B cell (primary cell): ENCODE measurements at regions of chr12 and their contacts with region 1.

Region 1: DNA sequence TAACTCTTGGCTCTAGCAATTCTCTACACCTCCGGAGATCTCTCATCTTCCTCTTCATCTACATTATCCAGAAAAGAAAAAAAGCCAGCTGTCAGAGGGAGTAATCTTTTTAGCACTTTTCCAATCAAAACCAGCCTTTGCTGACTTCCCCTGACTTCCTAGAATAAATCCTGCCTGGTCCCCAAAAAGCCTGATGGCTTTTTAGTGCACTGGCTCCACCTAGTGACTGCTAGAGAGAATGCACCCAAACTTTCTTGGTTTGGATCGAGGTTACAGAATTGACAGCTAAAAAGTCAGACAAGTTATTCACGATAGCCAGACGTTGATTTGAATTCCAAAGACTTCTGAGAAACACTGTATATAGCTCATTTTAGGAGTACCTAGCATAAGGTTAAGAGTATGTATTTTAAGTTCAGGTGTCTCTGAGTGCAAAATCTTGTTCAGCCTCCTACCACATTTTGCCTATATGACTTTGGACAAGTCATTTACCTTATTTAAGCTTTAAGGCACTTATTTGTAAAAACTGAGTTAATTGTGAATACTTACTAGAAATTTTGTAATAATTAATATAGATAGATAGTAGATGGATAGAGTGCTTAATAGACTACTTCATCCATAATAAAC is 185.7 kb upstream of the GRIN2B start:
- DNase-seq: peak; percentile 76
- ATAC-seq: peak; percentile 72
- H3K4me3 ChIP-seq: no peak overlapping the region
- H3K4me3 Mint-ChIP-seq: no peak overlapping the region
- H3K27ac ChIP-seq: no peak overlapping the region
- H3K27ac Mint-ChIP-seq: no peak overlapping the region
- H3K4me1 ChIP-seq: peaks cover 19 to 21% of the 10 kb centered on the region in 2 donors
- H3K4me1 Mint-ChIP-seq: peaks cover 25% of the 10 kb centered on the region
- H3K27me3 ChIP-seq: no peaks in the 10 kb centered on the region
- H3K27me3 Mint-ChIP-seq: no peaks in the 10 kb centered on the region
- CTCF ChIP-seq: peak; percentile 100

Region 2: GRCh38 chr12:13278249-13278787 is 888.8 kb before region 1 on chr12:
- CTCF ChIA-PET with region 1: interaction called, 18 read pairs
- POLR2A ChIA-PET with region 1: no interaction called
- intact Hi-C with region 1: loop called (anchors 5 kb)
- DNase-seq: peak; percentile 65
- ATAC-seq: peak; percentile 60
- H3K4me3 ChIP-seq: no peak overlapping the region
- H3K4me3 Mint-ChIP-seq: no peak overlapping the region
- H3K27ac ChIP-seq: no peak overlapping the region
- H3K27ac Mint-ChIP-seq: no peak overlapping the region
- H3K4me1 ChIP-seq: peaks cover 4 to 5% of the 10 kb centered on the region in 2 donors
- H3K4me1 Mint-ChIP-seq: peaks cover 6% of the 10 kb centered on the region
- H3K27me3 ChIP-seq: peaks cover 0 to 38% (median 10%) of the 10 kb centered on the region in 4 experiments
- H3K27me3 Mint-ChIP-seq: peaks cover 42% of the 10 kb centered on the region
- CTCF ChIP-seq: peak; percentile 97

Region 3: GRCh38 chr12:13744561-13744960 is 422.6 kb before region 1 on chr12:
- CTCF ChIA-PET with region 1: no interaction called
- POLR2A ChIA-PET with region 1: no interaction called
- intact Hi-C with region 1: loop called (anchors 2 kb)
- DNase-seq: no peak
- ATAC-seq: no peak
- H3K4me3 ChIP-seq: no peak overlapping the region
- H3K4me3 Mint-ChIP-seq: no peak overlapping the region
- H3K27ac ChIP-seq: no peak overlapping the region
- H3K27ac Mint-ChIP-seq: no peak overlapping the region
- H3K4me1 ChIP-seq: peaks cover 0 to 4% of the 10 kb centered on the region in 2 donors
- H3K4me1 Mint-ChIP-seq: peaks cover 3% of the 10 kb centered on the region
- H3K27me3 ChIP-seq: peaks cover 0 to 7% (median 3%) of the 10 kb centered on the region in 4 experiments
- H3K27me3 Mint-ChIP-seq: peaks cover 35% of the 10 kb centered on the region
- CTCF ChIP-seq: no peak

Region 4: GRCh38 chr12:13962699-13963098 is 204.4 kb before region 1 on chr12:
- CTCF ChIA-PET with region 1: no interaction called
- POLR2A ChIA-PET with region 1: no interaction called
- intact Hi-C with region 1: loop called (anchors 10 kb)
- DNase-seq: no peak
- ATAC-seq: no peak
- H3K4me3 ChIP-seq: no peak overlapping the region
- H3K4me3 Mint-ChIP-seq: no peak overlapping the region
- H3K27ac ChIP-seq: no peak overlapping the region
- H3K27ac Mint-ChIP-seq: no peak overlapping the region
- H3K4me1 ChIP-seq: no peaks in the 10 kb centered on the region
- H3K4me1 Mint-ChIP-seq: no peaks in the 10 kb centered on the region
- H3K27me3 ChIP-seq: peaks cover 0 to 28% (median 11%) of the 10 kb centered on the region in 4 experiments
- H3K27me3 Mint-ChIP-seq: peaks cover 52% of the 10 kb centered on the region
- CTCF ChIP-seq: peak; percentile 24

Region 5: DNA sequence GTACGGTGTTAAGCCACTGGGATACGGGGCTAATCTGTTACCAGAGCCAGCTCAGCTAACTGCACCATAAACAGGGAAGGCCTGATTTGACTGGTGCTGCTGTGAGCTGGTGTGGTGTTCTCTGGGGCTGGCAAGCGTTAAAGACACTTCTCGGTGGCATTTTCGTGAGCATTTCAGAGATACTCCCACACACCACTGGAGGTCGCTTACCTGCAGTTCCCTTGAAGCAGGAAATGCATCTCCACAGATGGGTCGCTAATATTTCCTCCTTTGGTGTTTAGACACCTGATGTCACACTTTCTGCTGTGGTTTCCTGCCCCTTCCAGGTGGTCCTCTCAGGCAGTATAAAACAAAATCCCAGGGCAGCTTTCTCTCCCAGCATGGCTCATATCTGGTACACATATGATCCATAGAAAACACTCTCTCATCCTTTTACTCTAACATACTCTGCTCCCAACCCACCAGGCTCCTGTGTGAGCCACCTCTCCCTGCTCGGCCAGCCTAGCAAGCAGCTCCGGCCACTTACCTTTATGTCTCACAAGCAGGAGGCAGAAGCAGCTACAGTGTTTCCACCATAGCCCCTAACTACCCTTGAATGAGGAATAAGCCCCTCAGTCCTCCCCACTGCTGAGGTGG is 55.8 kb before region 1 on chr12:
- CTCF ChIA-PET with region 1: interaction called, 211 read pairs
- POLR2A ChIA-PET with region 1: no interaction called
- intact Hi-C with region 1: loop called (anchors 1 kb)
- DNase-seq: peak; percentile 82
- ATAC-seq: peak; percentile 97
- H3K4me3 ChIP-seq: no peak overlapping the region
- H3K4me3 Mint-ChIP-seq: peak overlapping the region; percentile 26
- H3K27ac ChIP-seq: no peak overlapping the region
- H3K27ac Mint-ChIP-seq: peak overlapping the region; percentile 67
- H3K4me1 ChIP-seq: peaks cover 13% of the 10 kb centered on the region in 2 donors
- H3K4me1 Mint-ChIP-seq: peaks cover 13% of the 10 kb centered on the region
- H3K27me3 ChIP-seq: no peaks in the 10 kb centered on the region
- H3K27me3 Mint-ChIP-seq: no peaks in the 10 kb centered on the region
- CTCF ChIP-seq: peak; percentile 76

Region 6: DNA sequence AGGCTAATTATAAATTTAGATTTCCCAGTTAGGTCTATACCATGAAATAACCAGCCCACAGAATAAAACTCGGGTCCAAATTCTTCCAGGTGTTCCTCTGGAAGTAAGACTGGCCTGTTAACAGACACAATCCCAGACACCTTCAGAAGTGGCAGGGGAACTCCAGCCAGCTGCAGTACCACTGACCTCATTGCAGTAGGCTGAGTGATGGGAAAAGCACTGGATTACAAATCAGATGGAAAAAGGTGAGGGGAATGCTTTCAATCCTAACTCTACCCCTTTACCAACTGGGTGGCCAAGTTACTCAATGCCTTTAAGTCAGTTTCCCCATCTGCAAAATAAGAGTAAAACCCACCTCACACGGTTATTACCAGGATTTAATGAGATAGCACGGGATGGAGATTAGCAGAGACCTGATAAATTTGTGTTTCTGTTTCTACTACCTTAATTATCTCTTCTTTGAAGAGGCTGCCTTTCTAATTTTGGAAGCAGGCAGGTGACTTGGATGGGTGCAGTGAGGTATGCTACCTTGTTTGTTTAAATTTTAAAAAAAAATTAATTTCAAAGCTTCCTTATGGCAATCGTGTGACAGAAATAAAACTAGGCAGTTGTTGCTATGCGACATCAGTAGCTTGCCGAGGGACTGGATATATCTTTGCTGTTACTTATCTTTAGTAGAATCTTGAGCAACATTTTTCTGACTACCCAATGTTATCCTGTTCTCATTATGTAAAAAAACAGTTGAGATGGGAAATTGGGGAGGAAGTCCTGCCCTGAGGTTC is 18.4 kb before region 1 on chr12:
- CTCF ChIA-PET with region 1: interaction called, 19 read pairs
- POLR2A ChIA-PET with region 1: no interaction called
- intact Hi-C with region 1: no loop called
- DNase-seq: no peak
- ATAC-seq: no peak
- H3K4me3 ChIP-seq: no peak overlapping the region
- H3K4me3 Mint-ChIP-seq: peak overlapping the region; percentile 35
- H3K27ac ChIP-seq: no peak overlapping the region
- H3K27ac Mint-ChIP-seq: no peak overlapping the region
- H3K4me1 ChIP-seq: peaks cover 31 to 39% of the 10 kb centered on the region in 2 donors
- H3K4me1 Mint-ChIP-seq: peaks cover 41% of the 10 kb centered on the region
- H3K27me3 ChIP-seq: no peaks in the 10 kb centered on the region
- H3K27me3 Mint-ChIP-seq: peaks cover 3% of the 10 kb centered on the region
- CTCF ChIP-seq: no peak

Region 7: GRCh38 chr12:14190694-14191093 is 23.6 kb after region 1 on chr12:
- CTCF ChIA-PET with region 1: interaction called, 76 read pairs
- POLR2A ChIA-PET with region 1: no interaction called
- intact Hi-C with region 1: no loop called
- DNase-seq: no peak
- ATAC-seq: no peak
- H3K4me3 ChIP-seq: no peak overlapping the region
- H3K4me3 Mint-ChIP-seq: peak overlapping the region; percentile 46
- H3K27ac ChIP-seq: no peak overlapping the region
- H3K27ac Mint-ChIP-seq: no peak overlapping the region
- H3K4me1 ChIP-seq: peaks cover 22 to 24% of the 10 kb centered on the region in 2 donors
- H3K4me1 Mint-ChIP-seq: peaks cover 34% of the 10 kb centered on the region
- H3K27me3 ChIP-seq: no peaks in the 10 kb centered on the region
- H3K27me3 Mint-ChIP-seq: peaks cover 2% of the 10 kb centered on the region
- CTCF ChIP-seq: no peak

Region 8: DNA sequence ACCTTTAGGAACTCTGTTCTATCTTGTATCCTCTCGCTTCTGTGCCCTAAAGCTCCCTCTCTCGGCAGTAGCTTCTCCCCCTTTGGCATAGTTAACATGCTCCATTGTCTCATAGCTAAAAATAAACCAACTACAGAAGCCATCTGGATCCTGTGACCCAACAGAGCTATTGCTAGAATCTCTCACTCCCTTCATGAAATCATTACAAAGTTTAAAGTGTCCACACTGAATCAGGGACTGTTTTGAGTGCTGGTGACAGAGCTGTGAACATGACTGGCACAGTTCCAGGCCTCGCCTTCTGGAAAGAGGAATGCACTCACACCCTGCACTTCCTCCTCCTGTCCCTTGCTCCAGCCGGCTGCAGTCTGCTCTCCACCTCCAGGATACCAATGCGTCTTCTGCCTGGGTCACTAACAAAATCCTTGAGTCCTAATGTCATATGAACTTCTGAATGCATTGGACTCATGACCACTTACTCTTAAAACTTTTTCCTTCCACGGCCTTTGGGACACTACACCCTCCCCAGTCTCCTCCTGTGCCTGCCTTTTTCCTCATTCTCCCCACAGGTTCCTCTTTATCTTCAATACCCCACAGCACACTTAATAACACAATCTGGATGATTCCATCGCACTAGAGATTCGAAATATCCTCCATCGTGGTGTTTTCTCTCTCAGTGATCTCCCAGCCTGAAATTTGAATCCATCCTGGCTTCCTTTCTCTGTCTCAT is 387.3 kb after region 1 on chr12:
- CTCF ChIA-PET with region 1: no interaction called
- POLR2A ChIA-PET with region 1: no interaction called
- intact Hi-C with region 1: no loop called
- DNase-seq: no peak
- ATAC-seq: no peak
- H3K4me3 ChIP-seq: no peak overlapping the region
- H3K4me3 Mint-ChIP-seq: no peak overlapping the region
- H3K27ac ChIP-seq: no peak overlapping the region
- H3K27ac Mint-ChIP-seq: no peak overlapping the region
- H3K4me1 ChIP-seq: peaks cover 11 to 14% of the 10 kb centered on the region in 2 donors
- H3K4me1 Mint-ChIP-seq: peaks cover 14% of the 10 kb centered on the region
- H3K27me3 ChIP-seq: no peaks in the 10 kb centered on the region
- H3K27me3 Mint-ChIP-seq: no peaks in the 10 kb centered on the region
- CTCF ChIP-seq: no peak